ENCODE measurements at regions of chr12 and their contacts with region 1.

Region 1: DNA sequence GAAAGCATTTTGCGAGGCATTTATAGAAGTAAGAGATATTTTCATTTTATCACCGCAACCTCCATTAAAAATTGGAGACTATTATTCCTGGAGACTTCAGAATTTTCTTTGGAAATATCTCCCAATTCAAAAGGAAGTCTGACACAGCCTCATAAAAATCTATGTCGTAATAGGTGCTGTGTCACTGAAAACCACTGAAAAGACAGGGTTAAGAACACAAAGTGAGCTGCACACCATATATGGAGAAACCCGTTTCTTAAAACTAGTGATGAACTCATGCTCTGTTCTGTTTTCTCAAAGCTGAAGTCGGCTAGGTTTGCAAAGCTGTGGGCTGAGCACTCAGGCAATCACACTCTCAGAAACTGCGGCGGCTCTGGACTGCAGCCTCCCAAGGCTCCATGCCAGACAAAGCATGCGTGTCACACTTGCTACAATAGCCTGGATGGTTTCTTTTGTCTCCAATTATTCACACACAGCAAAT is at the start of gene GLIPR1:
- DNase-seq: no peak
- H3K4me3 ChIP-seq: no peak within 1 kb of the TSS
- H3K27ac ChIP-seq: no peak within 1 kb of the TSS
- H3K4me1 ChIP-seq: peaks cover 0 to 8% (median 5%) of the 10 kb centered on the region in 4 experiments; a peak in 5 of 7 replicates
- H3K27me3 ChIP-seq: no peaks in the 10 kb centered on the region
- CTCF ChIP-seq: no peak
- EP300 ChIP-seq: no peak
- POLR2A ChIP-seq: no peak
- RAD21 ChIP-seq: no peak
- total RNA-seq, gene GLIPR1: 1.5 and 1.7 TPM in 2 replicates

Region 2: DNA sequence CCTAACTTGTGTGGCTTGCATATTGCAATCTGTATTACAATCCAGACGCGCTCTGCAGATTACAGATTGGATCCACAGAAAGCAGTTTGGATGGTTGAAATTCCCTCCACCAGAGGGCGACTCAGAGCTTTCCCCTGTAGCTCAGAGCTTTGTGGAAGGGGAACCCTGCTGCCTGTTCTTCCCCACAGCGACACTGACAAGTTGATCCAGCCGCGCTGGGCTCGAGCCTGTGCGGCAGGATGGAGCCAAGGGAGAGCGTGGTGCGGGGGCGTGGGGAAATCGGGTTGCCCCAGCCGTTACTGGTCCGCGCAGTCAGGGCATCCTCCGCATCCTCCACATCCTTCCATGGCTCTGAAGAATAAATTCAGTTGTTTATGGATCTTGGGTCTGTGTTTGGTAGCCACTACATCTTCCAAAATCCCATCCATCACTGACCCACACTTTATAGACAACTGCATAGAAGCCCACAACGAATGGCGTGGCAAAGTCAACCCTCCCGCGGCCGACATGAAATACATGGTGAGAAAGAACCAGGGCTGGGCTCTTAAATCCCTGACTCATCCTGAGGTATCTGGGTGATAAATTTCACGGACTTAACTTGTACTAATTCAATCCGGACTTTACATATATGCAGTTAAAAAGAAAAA is 146.0 kb before region 1 on chr12 and contains the start of gene GLIPR1L1:
- CTCF ChIA-PET with region 1: interaction called, 17 read pairs
- POLR2A ChIA-PET with region 1: no interaction called
- DNase-seq: peak; percentile 86 to 94
- H3K4me3 ChIP-seq: peak within 1 kb of the TSS; percentile 16 to 51 (median 34); a peak in 7 of 8 replicates
- H3K27ac ChIP-seq: no peak within 1 kb of the TSS
- H3K4me1 ChIP-seq: peaks cover 2 to 5% (median 3%) of the 10 kb centered on the region in 4 experiments; a peak in 4 of 7 replicates
- H3K27me3 ChIP-seq: no peaks in the 10 kb centered on the region
- CTCF ChIP-seq: peak; percentile 59 to 95 (median 85)
- EP300 ChIP-seq: peak in 1 of 2 experiments; percentile 65; a peak in 1 of 3 replicates
- POLR2A ChIP-seq: peak in 1 of 2 experiments; percentile 47; a peak in 1 of 3 replicates
- RAD21 ChIP-seq: peak; percentile 81 to 82
- total RNA-seq, gene GLIPR1L1: 1.7 and 2.0 TPM in 2 replicates

Region 3: GRCh38 chr12:75390899-75391538 is 89.5 kb before region 1 on chr12 and contains the start of gene GLIPR1L2:
- CTCF ChIA-PET with region 1: interaction called, 21 read pairs
- POLR2A ChIA-PET with region 1: interaction called, 4 read pairs
- DNase-seq: peak; percentile 97 to 98
- H3K4me3 ChIP-seq: peak within 1 kb of the TSS; percentile 51 to 63 (median 58)
- H3K27ac ChIP-seq: peak within 1 kb of the TSS; percentile 33; the same call in 1 of the 2 replicates
- H3K4me1 ChIP-seq: peaks cover 0 to 3% (median 0%) of the 10 kb centered on the region in 4 experiments; a peak in 1 of 7 replicates
- H3K27me3 ChIP-seq: no peaks in the 10 kb centered on the region
- CTCF ChIP-seq: peak; percentile 75 to 94 (median 80)
- EP300 ChIP-seq: no peak
- POLR2A ChIP-seq: peak in 1 of 2 experiments; percentile 72; a peak in 2 of 3 replicates
- RAD21 ChIP-seq: peak; percentile 49 to 66; a peak in 3 of 4 replicates
- total RNA-seq, gene GLIPR1L2: not detected in 2 replicates

Region 4: DNA sequence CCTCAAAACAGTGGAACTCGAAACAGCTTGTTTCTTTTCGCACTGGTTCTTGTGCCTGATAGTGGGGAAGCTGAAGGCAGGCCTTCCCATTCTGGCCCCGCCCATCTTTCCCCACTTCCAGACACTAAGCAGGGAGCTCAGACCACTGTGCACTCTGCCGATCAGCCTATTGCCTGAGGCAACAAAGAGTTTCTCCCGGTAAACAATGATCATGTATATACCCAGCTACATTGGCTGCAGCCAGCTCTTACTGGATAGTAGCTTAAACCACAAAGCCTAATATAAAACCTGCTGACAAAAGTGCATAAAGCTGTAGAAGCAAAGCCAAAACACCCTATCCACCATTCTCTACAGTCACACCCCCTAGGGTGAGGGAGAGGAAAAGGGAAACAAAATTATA is 24.7 kb before region 1 on chr12:
- CTCF ChIA-PET with region 1: interaction called, 18 read pairs
- POLR2A ChIA-PET with region 1: no interaction called
- DNase-seq: no peak
- H3K4me3 ChIP-seq: no peak overlapping the region
- H3K27ac ChIP-seq: no peak overlapping the region
- H3K4me1 ChIP-seq: no peaks in the 10 kb centered on the region
- H3K27me3 ChIP-seq: no peaks in the 10 kb centered on the region
- CTCF ChIP-seq: no peak
- EP300 ChIP-seq: no peak
- POLR2A ChIP-seq: no peak
- RAD21 ChIP-seq: no peak

Region 5: DNA sequence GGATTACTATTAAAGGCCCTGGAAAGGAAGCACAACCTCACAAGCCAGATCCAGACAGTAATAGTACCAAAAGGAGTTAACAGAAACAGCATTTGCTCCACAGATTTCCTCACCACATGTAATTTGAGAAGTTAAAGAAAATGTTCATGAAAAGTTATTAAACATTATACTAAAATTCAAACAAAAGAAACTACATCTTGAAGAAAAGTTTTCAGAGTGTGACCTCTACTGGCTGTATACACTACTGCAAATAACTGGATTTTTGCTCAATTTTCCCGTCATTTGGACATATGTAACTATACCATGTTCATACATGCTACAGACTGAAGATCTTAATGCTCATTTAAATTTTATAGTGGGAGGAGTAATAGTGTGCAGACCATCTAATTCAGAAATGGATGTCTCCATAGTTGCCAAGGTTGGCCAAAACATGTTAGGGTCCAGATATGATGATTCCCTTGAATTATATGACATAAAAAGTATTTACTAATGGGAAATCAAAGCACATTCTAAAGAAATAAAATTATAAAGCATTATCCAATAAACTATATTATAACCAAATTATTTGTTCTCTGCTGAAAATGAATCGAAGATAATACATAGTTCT is 25.3 kb after region 1 on chr12:
- CTCF ChIA-PET with region 1: interaction called, 40 read pairs
- POLR2A ChIA-PET with region 1: no interaction called
- DNase-seq: no peak
- H3K4me3 ChIP-seq: no peak overlapping the region
- H3K27ac ChIP-seq: no peak overlapping the region
- H3K4me1 ChIP-seq: no peaks in the 10 kb centered on the region; a peak in 2 of 7 replicates
- H3K27me3 ChIP-seq: no peaks in the 10 kb centered on the region
- CTCF ChIP-seq: peak in 2 of 3 experiments; percentile 11 to 36; a peak in 2 of 4 replicates
- EP300 ChIP-seq: no peak
- POLR2A ChIP-seq: no peak
- RAD21 ChIP-seq: peak in 1 of 2 experiments; percentile 36; a peak in 3 of 4 replicates

Measured in H1 (cell line).